RWPE1 (cell line): ENCODE measurements at regions of chr10 and their contacts with region 1.

Region 1: GRCh38 chr10:102352066-102352715 is 43.3 kb upstream of the NFKB2 start:
- DNase-seq: peak; percentile 75
- H3K27ac ChIP-seq: no peak overlapping the region
- CTCF ChIP-seq: peak; percentile 94

Region 2: GRCh38 chr10:101807158-101807557 is 545.0 kb before region 1 on chr10:
- CTCF ChIA-PET with region 1: no interaction called
- POLR2A ChIA-PET with region 1: no interaction called
- DNase-seq: no peak
- H3K27ac ChIP-seq: no peak overlapping the region
- CTCF ChIP-seq: no peak

Region 3: GRCh38 chr10:101961591-101962498 is 390.3 kb before region 1 on chr10:
- CTCF ChIA-PET with region 1: no interaction called
- POLR2A ChIA-PET with region 1: no interaction called
- DNase-seq: no peak
- H3K27ac ChIP-seq: no peak overlapping the region
- CTCF ChIP-seq: no peak

Region 4: GRCh38 chr10:102167861-102168260 is 184.3 kb before region 1 on chr10:
- CTCF ChIA-PET with region 1: interaction called, 11 read pairs
- POLR2A ChIA-PET with region 1: no interaction called
- DNase-seq: no peak
- H3K27ac ChIP-seq: no peak overlapping the region
- CTCF ChIP-seq: no peak

Region 5: DNA sequence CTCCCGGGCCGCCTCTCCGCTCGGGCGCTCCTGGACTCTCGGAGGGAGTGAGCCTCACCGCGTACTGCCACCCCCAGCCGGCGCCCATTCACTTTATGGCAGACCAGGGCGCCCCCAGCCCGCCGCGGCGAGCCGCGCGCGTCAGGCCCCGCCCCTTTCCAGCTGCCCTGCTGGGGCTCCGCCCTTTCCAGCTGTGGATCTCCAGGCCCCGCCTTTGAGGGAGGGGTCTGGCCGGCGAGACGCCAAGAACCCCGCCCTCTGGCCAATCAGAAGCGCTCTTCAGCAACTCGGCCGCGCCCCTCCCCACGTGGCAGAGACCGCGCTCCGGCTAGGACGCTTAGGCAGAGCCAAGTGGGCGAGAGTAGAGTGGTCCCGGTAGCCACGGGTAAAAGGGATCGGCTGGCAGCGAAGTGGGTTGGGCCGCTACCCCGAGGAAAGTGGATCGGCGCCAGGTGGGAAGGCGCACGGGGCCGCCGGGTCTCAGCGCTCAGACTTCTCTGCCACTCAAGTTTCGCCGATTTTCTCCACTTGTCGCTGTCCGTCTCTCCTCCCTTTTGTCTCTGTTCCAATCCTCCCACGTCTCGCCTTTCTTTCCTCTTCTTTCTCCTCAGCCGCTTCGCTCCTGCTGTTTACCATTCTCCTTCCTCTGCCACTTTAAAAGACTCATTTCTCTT is 110.6 kb before region 1 on chr10 and contains the start of gene PITX3:
- CTCF ChIA-PET with region 1: interaction called, 370 read pairs
- POLR2A ChIA-PET with region 1: no interaction called
- DNase-seq: peak; percentile 98
- H3K27ac ChIP-seq: no peak within 1 kb of the TSS
- CTCF ChIP-seq: no peak

Region 6: DNA sequence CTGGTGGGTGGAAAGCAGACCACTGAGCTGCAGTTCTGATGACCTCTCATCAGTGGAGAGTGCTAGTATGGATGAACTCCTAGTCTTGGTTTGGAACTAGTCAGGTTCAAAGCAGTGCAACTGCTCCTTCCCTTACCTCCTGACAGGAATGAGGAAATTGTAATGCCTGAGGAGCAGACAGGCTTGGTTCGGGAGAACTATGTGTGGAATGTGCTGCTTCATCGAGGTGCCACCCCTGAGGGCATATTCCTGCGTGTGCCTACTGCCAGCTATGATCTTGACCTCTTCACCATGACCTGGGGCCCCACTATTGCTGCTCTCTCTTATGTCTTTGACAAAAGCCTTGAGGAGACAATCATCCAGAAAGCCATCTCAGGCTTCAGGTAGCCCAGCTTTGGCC is 15.9 kb after region 1 on chr10:
- CTCF ChIA-PET with region 1: interaction called, 13 read pairs
- POLR2A ChIA-PET with region 1: interaction called, 4 read pairs
- DNase-seq: peak; percentile 57
- H3K27ac ChIP-seq: no peak overlapping the region
- CTCF ChIP-seq: no peak

Region 7: DNA sequence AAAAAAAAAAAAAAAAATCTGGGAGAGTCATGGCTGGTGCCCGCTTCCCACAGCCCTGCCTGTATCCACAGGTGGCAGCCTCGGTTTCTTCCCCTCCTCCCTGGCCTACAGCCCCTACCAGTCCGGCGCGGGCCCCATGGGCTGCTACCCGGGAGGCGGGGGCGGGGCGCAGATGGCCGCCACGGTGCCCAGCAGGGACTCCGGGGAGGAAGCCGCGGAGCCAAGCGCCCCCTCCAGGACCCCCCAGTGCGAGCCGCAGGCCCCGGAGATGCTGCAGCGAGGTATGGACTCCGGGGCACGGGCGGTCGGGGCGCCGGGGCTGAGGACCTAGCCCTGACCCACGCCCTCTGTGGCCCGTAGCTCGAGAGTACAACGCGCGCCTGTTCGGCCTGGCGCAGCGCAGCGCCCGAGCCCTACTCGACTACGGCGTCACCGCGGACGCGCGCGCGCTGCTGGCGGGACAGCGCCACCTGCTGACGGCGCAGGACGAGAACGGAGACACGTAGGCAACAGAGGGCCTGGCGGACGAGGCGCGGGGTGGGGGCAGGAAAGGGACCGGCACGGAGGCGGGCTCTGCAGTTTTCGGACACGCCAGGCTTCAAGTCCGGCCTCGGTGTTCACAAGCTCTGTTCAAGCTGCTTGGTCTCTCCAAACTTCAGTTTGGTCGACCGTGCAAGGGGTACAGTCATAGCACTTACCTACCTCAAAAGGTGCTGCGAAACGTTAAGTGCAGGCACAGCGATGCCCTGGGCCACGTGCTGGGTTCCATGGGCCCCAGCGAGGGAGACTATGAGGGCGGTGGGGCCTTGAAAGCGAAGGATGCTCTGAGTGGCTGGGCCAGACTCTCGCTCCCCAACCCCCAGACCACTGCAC is 47.3 kb after region 1 on chr10:
- CTCF ChIA-PET with region 1: interaction called, 10 read pairs
- POLR2A ChIA-PET with region 1: no interaction called
- DNase-seq: peak; percentile 84
- H3K27ac ChIP-seq: peak overlapping the region; percentile 85
- CTCF ChIP-seq: peak; percentile 96